ENCODE measurements at regions of chr10 and their contacts with region 1.

Region 1: GRCh38 chr10:75029857-75030256 is 81.6 kb upstream of the SAMD8 start:
- DNase-seq: no peak
- H3K4me3 Mint-ChIP-seq: no peak overlapping the region
- H3K27ac Mint-ChIP-seq: no peak overlapping the region
- H3K4me1 Mint-ChIP-seq: no peaks in the 10 kb centered on the region
- H3K27me3 Mint-ChIP-seq: no peaks in the 10 kb centered on the region
- CTCF ChIP-seq: no peak

Region 2: GRCh38 chr10:74753442-74754211 is 276.2 kb before region 1 on chr10:
- CTCF ChIA-PET with region 1: no interaction called
- intact Hi-C with region 1: loop called (anchors 10 kb)
- DNase-seq: no peak
- H3K4me3 Mint-ChIP-seq: no peak overlapping the region
- H3K27ac Mint-ChIP-seq: no peak overlapping the region
- H3K4me1 Mint-ChIP-seq: no peaks in the 10 kb centered on the region
- H3K27me3 Mint-ChIP-seq: no peaks in the 10 kb centered on the region
- CTCF ChIP-seq: no peak

Measured in Calu3 (cell line).